Posterior cingulate gyrus (tissue), 11 donors: ENCODE measurements at regions of chr2 and their contacts with region 1.

Region 1: DNA sequence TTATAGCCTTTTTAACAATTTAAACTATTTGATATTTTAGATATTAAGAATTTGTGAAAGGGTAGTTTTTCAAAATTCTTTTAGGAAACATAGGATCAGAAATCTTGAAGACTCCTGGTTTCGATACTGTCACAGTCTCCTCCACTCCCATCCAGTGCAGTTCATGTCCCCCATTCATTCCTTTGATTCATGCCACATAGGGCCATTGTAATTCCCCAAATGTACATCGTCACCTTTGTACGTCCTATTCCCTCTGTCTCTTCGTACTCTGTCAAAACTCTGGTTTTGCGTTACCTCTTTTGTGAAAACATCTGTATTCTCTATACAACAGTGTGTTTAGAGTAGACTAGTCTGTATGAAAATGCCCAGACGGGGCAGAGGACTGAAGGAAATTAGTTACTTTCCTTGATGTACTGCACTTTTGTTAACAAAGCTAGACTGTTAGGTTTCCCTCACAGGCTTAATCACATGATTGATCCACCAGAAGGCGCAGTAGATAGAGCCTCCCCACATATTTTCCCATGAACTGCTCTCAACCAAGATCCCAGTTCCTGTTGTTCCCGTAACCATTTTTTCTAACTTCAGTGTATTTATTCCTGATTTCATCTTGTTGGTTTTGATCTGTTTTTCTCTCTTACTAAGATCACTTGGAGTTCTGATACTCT is 2.5 kb downstream of the MRPL35 start:
- DNase-seq: no peak

Region 2: GRCh38 chr2:86372641-86373503 is 171.1 kb after region 1 on chr2:
- intact Hi-C with region 1: loop called (anchors 5 kb)
- DNase-seq: peak in 2 of 10 donors; percentile 38 to 55